GM10248 (cell line): ENCODE measurements at regions of chr3 and their contacts with region 1.

Region 1: GRCh38 chr3:45841757-45842491 is at the start of gene LZTFL1:
- DNase-seq: peak; percentile 93
- CTCF ChIP-seq: no peak

Region 2: DNA sequence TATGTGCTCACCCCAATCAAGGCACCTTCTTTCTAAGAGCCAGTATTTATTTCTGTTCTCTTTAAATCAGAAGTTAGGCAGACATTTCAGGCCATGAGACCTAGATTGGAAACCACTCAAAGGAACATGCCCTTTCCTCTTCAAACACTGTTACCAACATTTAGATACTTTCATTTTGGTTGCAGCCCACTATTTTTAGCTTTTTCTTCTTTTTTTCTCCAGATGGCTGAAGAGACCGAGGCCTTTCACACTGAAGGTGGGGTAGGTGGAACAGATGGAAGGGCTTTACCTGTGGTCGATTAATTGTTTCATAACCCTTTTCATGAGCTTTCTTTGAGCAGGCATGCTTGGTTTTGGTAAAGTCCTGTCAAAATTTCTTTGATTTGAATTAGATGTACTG is 10.9 kb after region 1 on chr3:
- CTCF ChIA-PET with region 1: interaction called, 23 read pairs
- POLR2A ChIA-PET with region 1: no interaction called
- DNase-seq: peak; percentile 26
- CTCF ChIP-seq: no peak

Region 3: DNA sequence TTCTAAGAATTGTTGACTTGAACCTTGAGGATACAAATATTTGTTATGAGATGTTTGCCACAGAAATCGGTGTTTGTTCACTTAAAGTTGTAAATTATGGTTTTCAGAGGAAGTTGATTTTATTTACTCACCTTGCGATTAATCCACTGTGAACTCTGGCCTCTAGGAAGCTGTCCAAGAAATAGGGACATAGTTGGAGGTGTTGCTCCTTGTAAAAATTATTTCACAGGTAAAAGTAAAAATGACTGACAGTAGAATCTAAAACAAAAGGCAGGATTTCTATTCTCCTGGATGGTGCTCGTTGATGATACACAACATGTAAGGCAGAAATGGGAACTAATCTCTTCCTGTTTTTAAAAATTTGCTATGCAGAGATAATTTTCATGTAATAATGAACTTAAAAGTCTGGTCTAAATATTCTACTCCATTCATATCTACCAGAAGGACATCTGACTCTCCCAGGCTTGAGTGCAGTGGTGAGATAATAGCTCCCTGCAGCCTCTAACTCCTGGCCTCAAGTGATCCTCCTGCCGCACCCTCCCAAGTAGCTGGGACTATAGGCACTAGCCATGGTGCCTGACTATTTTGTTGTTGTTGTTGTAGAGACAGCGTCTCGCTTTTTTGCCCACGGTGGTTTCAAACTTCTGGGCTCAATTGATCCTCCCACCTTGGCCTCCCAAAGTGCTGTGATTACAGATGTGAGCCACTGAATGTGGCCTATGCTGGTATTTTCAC is 17.1 kb after region 1 on chr3:
- CTCF ChIA-PET with region 1: interaction called, 23 read pairs
- POLR2A ChIA-PET with region 1: interaction called, 3 read pairs
- DNase-seq: no peak
- CTCF ChIP-seq: no peak